ENCODE measurements at regions of chr6 and their contacts with region 1.

Region 1: DNA sequence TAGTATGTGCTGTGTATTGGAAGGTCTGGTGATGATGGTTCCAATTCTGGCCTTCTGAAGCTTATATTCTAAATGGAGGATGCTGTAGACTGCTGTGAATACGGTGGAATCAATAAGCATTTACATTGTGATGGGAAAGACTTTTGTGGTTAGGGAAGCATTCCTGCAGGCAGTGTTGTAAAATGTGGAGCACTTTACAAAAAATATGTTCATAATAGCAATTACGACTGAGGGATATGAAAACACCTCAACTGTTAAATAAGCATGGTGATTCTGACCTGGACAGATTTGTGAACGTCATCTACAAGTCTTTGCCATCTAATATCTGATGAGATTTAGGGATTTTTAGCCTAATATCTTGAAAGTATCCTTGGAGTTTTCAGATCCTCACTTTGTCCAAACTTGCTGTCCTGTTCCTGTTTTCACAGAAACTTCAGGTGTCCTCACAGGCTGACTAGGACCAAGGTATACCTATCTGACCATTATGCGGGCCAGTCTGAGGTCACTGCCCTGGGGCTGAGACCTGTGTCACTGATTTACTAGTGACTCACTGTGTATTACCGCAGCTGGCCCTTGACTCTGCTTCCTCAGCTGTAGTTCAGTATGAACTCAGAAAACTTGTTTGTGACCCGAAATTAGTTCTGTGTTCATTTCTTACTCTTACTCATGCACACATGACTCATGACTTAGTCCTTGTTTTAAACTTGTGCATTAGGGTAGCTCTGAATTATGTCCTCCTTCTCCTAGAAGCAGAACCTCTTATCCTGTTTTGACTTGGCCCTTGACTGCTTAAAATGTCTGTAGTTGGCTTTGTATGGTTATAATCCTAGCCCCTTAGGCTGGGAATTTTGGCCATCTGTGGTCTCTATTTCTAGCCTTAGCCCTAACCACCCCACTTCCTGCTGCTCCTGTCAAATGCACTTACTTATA is 343.0 kb downstream of the CDKAL1 start:
- DNase-seq: peak; percentile 94
- H3K4me3 ChIP-seq: no peak overlapping the region
- H3K27ac ChIP-seq: peak overlapping the region; percentile 85
- H3K4me1 ChIP-seq: peaks cover 38% of the 10 kb centered on the region
- H3K27me3 ChIP-seq: no peaks in the 10 kb centered on the region
- CTCF ChIP-seq: no peak
- POLR2A ChIP-seq: peak; percentile 8

Region 2: DNA sequence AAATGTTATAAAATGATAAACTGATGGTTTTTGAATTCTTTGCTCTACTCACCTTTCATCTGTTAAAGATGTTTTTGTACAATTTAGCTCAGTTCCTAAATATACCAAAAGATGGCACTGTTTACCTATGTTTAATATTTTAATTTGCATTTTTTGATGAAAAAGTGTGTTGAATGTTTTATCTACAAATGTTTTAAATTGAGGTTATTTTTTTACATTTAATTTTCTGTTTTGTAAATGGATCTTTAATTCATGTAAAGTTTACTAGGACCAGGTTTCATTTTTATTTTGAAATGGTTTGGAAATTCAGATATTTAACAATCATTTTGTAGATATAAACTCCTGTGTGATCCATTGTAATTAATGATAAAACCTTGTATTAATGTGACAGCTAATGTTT is 313.0 kb before region 1 on chr6:
- CTCF ChIA-PET with region 1: interaction called, 15 read pairs
- POLR2A ChIA-PET with region 1: no interaction called
- dilution Hi-C with region 1: no loop called
- intact Hi-C with region 1: loop called (anchors 1 kb)
- DNase-seq: peak; percentile 59
- H3K4me3 ChIP-seq: peak overlapping the region in 1 of 3 experiments; percentile 28
- H3K27ac ChIP-seq: peak overlapping the region; percentile 32
- H3K4me1 ChIP-seq: peaks cover 12% of the 10 kb centered on the region
- H3K27me3 ChIP-seq: no peaks in the 10 kb centered on the region
- CTCF ChIP-seq: peak; percentile 16 to 33
- POLR2A ChIP-seq: no peak

Region 3: DNA sequence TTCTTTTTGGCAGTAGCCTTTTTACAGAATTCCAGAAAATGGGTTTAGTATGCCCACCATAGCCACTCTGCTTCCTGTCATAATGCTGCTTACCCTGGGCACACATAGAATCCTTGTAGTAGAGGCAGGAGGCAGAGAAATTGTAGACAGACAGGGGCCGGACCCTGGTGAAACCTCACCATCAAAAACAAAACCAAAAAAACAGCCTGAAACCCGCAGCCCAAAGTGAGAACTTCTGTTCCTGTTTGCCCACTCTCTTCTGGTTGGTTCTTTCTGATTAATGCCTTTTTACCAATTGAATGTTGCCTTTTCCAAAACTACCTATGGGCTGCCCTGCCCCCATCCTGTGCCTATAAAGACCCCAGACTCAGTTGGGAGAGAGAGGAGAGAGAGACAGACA is 154.8 kb before region 1 on chr6:
- CTCF ChIA-PET with region 1: no interaction called
- POLR2A ChIA-PET with region 1: no interaction called
- dilution Hi-C with region 1: no loop called
- intact Hi-C with region 1: no loop called
- DNase-seq: no peak
- H3K4me3 ChIP-seq: no peak overlapping the region
- H3K27ac ChIP-seq: no peak overlapping the region
- H3K4me1 ChIP-seq: no peaks in the 10 kb centered on the region
- H3K27me3 ChIP-seq: no peaks in the 10 kb centered on the region
- CTCF ChIP-seq: no peak
- POLR2A ChIP-seq: no peak

Region 4: DNA sequence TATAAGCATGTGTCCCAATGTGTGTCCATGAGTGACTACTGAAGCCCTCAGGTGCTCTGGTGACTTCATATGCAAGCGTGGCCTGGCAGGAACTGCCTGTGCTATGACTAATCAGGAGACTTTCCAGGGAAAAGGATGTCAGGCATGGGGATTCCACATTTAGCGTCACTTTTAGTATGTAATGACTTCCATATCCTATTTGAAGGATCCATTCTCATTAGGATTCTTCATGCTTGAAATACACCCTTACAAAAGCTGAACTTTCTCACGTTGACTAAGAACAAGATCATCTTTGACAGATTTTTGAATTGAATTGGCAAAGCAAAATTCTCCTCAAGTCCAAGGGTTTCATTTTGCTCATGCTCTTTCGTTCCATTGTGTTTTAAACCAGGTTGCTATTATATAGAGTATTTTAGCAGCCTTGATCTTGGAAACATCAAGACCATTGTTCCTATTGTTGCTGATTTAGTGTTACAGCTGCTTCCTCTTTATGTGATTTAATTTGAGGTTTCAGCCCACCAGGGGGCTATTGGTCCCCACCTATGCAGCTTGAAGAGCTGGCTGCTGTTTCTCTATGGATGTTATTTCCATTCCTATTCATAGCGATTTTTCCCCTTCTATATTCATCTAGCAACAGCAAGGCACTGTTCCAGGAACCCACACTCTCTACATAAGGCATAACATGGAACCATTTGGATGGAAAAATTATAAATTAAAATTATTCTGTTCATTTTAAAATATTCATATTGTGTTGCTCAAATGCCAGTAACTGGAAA is 75.6 kb after region 1 on chr6:
- CTCF ChIA-PET with region 1: no interaction called
- POLR2A ChIA-PET with region 1: no interaction called
- dilution Hi-C with region 1: no loop called
- intact Hi-C with region 1: loop called (anchors 1 kb)
- DNase-seq: peak; percentile 95
- H3K4me3 ChIP-seq: peak overlapping the region in 1 of 3 experiments; percentile 55
- H3K27ac ChIP-seq: peak overlapping the region; percentile 94
- H3K4me1 ChIP-seq: peaks cover 14% of the 10 kb centered on the region
- H3K27me3 ChIP-seq: no peaks in the 10 kb centered on the region
- CTCF ChIP-seq: peak; percentile 26 to 50
- POLR2A ChIP-seq: no peak

Region 5: GRCh38 chr6:21003780-21004541 is 126.7 kb after region 1 on chr6:
- CTCF ChIA-PET with region 1: interaction called, 4 read pairs
- POLR2A ChIA-PET with region 1: no interaction called
- dilution Hi-C with region 1: no loop called
- intact Hi-C with region 1: loop called (anchors 1 kb)
- DNase-seq: peak; percentile 93
- H3K4me3 ChIP-seq: peak overlapping the region in 1 of 3 experiments; percentile 29
- H3K27ac ChIP-seq: peak overlapping the region; percentile 96
- H3K4me1 ChIP-seq: peaks cover 34% of the 10 kb centered on the region
- H3K27me3 ChIP-seq: no peaks in the 10 kb centered on the region
- CTCF ChIP-seq: no peak
- POLR2A ChIP-seq: no peak

Region 6: GRCh38 chr6:21188505-21189223 is 311.4 kb after region 1 on chr6:
- CTCF ChIA-PET with region 1: no interaction called
- POLR2A ChIA-PET with region 1: no interaction called
- dilution Hi-C with region 1: no loop called
- intact Hi-C with region 1: loop called (anchors 2 kb)
- DNase-seq: peak; percentile 64
- H3K4me3 ChIP-seq: no peak overlapping the region
- H3K27ac ChIP-seq: peak overlapping the region; percentile 71
- H3K4me1 ChIP-seq: peaks cover 35% of the 10 kb centered on the region
- H3K27me3 ChIP-seq: no peaks in the 10 kb centered on the region
- CTCF ChIP-seq: no peak
- POLR2A ChIP-seq: no peak

Region 7: GRCh38 chr6:21946298-21946783 is 1069.1 kb after region 1 on chr6:
- CTCF ChIA-PET with region 1: no interaction called
- POLR2A ChIA-PET with region 1: no interaction called
- dilution Hi-C with region 1: no loop called
- intact Hi-C with region 1: loop called (anchors 5 kb)
- DNase-seq: no peak
- H3K4me3 ChIP-seq: no peak overlapping the region
- H3K27ac ChIP-seq: no peak overlapping the region
- H3K4me1 ChIP-seq: peaks cover 51% of the 10 kb centered on the region
- H3K27me3 ChIP-seq: no peaks in the 10 kb centered on the region
- CTCF ChIP-seq: no peak
- POLR2A ChIP-seq: no peak

Measured in endothelial cell of umbilical vein (primary cell).